ENCODE measurements at regions of chr3 and their contacts with region 1.

Region 1: DNA sequence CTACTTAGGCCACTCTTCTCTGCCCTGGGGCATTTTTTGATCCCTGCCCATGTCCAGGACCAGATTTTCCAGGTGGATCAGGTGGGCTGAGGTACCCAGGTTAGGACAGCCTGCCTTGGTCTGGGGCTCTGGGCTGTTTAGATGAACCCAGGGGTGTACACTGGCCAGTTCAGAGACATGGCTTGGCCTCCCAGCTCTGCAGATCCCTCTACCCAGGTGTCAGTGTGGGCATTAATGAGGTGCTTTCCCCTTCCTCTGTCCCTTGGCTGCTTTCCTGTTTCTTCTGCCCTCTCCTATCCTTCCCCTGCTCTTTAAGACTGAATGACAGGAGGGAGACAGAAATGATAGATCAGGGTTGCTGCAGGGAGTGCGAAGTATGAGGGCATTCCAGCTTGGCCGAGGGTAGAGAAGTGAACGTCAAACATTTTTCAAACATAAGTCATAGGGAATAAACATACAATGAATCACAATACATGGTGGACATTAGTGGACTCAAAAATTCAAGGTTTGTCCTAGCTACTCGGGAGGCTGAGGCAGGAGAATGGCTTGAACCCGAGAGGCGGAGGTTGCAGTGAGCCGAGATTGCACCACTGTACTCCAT is 30.5 kb downstream of the RTP1 start:
- DNase-seq: no peak
- H3K4me3 ChIP-seq: no peak overlapping the region
- H3K27ac ChIP-seq: no peak overlapping the region
- H3K4me1 ChIP-seq: peaks cover 0 to 13% (median 2%) of the 10 kb centered on the region in 4 donors
- H3K27me3 ChIP-seq: peaks cover 0 to 4% (median 0%) of the 10 kb centered on the region in 3 donors
- CTCF ChIP-seq: no peak
- EP300 ChIP-seq: no peak
- POLR2A ChIP-seq: no peak

Region 2: GRCh38 chr3:186965141-186965879 is 262.4 kb before region 1 on chr3:
- intact Hi-C with region 1: no loop called
- DNase-seq: peak in 1 of 2 donors; percentile 29
- H3K4me3 ChIP-seq: no peak overlapping the region
- H3K27ac ChIP-seq: peak overlapping the region in 2 of 5 donors; percentile 29 to 47
- H3K4me1 ChIP-seq: no peaks in the 10 kb centered on the region
- H3K27me3 ChIP-seq: no peaks in the 10 kb centered on the region
- CTCF ChIP-seq: no peak
- EP300 ChIP-seq: no peak
- POLR2A ChIP-seq: no peak

Region 3: DNA sequence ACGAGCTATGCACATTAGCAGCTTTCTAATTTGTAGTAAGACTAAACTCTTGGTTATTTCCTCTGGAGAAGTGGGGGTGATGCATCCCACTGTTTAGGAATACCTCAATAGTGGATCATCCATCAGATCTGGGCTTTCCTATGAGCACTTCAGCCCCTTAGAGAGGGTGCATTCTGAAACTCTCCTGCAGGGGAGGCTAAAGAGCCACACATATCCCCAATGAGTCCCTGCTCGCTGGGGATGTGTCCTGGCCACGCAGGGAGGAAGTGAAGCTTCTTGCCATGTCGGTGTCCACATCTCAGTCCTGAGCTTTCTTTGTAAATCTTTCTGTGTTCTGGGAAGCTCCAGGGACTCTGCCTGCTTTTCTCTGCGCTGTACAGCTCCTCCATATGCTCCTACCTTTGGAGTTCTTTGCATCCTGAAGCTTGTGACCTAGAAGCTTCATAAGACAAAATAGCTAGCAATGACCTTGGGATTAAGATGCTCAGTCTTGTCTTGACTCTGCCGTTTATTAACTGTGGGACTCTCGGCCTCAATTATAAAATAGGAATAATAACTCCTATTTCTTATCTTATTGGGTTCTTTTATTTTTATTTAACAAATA is 92.0 kb after region 1 on chr3:
- intact Hi-C with region 1: loop called (anchors 5 kb)
- DNase-seq: peak; percentile 83 to 84
- H3K4me3 ChIP-seq: no peak overlapping the region
- H3K27ac ChIP-seq: no peak overlapping the region
- H3K4me1 ChIP-seq: peaks cover 0 to 17% (median 7%) of the 10 kb centered on the region in 4 donors
- H3K27me3 ChIP-seq: peaks cover 0 to 63% (median 0%) of the 10 kb centered on the region in 3 donors
- CTCF ChIP-seq: peak in 6 of 7 experiments; percentile 38 to 92 (median 82)
- EP300 ChIP-seq: no peak
- POLR2A ChIP-seq: no peak